Esophagus muscularis mucosa (tissue), 4 donors: ENCODE measurements at regions of chr4 and their contacts with region 1.

Region 1: DNA sequence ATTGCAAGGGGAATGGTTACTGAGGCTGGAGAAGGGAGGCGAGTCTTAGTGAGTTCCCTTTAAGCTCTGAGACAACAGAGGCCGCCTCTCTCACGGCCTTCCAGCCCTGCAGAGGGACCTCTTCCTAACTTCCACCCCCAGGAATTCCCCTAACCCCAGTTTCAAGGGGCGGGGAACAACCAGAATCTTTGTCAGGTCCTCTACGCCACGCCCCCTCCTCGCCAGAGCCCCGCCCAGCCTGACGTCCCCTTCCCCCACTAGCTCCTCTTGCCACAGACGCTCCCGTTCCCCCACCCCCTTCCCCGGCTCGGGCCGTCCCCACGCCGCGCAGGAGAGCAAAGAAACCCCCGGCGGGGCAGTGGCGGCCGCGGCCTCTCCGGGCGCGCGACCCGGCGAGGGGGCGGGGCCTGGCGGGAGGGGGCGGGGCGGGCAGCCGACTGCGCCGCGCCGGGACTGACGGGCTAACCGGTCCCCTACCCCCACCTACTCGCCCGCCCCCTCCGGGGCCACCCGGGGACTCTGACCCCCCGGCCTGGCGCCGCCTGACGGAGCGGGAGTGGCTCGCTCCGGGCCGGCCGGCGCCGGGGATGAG is 12.3 kb upstream of the TMEM156 start:
- DNase-seq: peak; percentile 98
- H3K4me3 ChIP-seq: peak overlapping the region; percentile 92 to 97 (median 96)
- H3K27ac ChIP-seq: peak overlapping the region; percentile 94 to 98 (median 98)
- H3K4me1 ChIP-seq: peaks cover 8 to 58% (median 57%) of the 10 kb centered on the region in 4 donors
- H3K27me3 ChIP-seq: no peaks in the 10 kb centered on the region
- CTCF ChIP-seq: peak in 1 of 3 experiments; percentile 6
- EP300 ChIP-seq: no peak
- POLR2A ChIP-seq: no peak

Region 2: DNA sequence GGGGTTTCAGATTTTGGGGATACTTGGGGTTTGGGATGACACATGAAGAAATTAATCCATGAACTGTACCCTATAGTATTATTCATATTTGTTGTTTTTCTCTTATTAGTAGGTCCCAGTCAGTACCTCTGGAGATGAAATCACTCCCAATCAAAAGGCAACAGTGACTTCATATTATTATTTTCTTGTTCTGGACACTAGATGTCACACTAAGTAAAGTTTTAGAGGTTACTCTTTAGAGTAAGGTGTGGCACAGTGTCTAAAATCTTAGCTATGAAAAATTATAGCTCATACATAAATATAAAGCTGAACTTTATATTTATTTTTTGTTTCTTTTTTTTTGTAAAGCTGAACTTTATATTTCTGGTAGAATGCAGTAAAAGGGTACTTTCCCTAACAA is 141.8 kb before region 1 on chr4:
- intact Hi-C with region 1: loop called (anchors 10 kb)
- DNase-seq: no peak
- H3K4me3 ChIP-seq: no peak overlapping the region
- H3K27ac ChIP-seq: no peak overlapping the region
- H3K4me1 ChIP-seq: peaks cover 0 to 42% (median 29%) of the 10 kb centered on the region in 4 donors
- H3K27me3 ChIP-seq: no peaks in the 10 kb centered on the region
- CTCF ChIP-seq: peak; percentile 40 to 52 (median 47)
- EP300 ChIP-seq: no peak
- POLR2A ChIP-seq: no peak

Region 3: DNA sequence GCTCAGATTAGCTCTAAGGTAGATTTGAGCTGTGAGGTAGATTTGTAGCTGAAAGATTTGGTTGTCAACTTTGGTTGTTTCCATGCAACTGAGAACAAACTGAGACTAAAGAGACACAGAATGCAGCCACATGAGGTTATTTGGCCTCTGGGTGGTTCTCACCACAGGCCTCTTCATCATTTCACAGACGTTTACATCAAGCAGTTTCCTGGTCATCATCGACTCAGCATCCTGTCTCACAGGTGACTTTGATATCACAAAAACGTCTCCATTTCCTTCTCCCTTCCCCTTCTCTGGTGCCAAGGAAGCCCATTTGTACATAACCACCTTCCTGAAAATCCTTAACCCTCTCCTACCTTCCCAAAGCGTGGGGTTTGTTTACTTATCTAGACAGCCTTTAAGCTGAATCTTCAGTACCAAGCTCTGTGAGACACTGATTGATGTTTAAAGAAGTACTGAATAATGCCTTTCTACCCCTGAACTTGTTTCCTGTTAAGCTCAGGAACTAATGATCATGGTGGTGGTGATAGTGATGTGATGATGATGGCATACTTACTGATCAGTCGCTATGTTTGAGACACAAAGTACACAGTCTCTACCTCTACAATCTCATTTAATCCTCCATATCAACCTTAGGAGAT is 94.9 kb before region 1 on chr4:
- intact Hi-C with region 1: loop called (anchors 5 kb)
- DNase-seq: no peak
- H3K4me3 ChIP-seq: no peak overlapping the region
- H3K27ac ChIP-seq: peak overlapping the region; percentile 84 to 87 (median 86)
- H3K4me1 ChIP-seq: peaks cover 0 to 70% (median 57%) of the 10 kb centered on the region in 4 donors
- H3K27me3 ChIP-seq: no peaks in the 10 kb centered on the region
- CTCF ChIP-seq: no peak
- EP300 ChIP-seq: no peak
- POLR2A ChIP-seq: no peak

Region 4: DNA sequence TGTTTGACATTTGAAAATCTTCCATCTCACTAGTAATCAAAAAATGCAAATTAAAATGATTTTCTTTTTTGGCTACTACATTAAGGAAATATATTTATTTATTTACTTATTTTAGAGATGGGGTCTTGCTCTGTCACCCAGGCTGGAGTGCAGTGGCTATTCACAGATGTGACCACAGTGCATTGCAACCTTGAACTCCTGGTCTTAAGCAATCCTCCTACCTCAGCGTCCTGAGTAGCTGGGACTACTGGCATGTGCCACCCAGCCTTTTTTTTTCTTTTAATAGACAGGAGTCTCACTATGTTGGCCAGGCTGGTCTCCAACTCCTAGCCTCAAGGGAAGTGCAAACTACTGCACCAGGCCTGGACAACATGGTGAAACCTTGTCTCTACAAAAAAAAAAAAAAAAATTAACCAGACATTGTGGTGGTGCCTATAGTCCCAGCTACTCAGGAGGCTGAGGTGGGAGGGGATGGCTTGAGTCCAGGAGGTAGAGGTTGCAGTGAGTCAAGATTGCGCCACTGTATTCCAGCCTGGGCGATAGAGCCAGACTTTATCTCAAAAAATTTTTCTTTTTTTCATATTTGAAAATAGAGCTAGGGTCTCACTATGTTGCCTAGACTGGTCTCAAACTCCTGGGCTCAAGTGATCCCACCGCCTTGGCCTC is 598.6 kb after region 1 on chr4:
- intact Hi-C with region 1: no loop called
- DNase-seq: no peak
- H3K4me3 ChIP-seq: no peak overlapping the region
- H3K27ac ChIP-seq: no peak overlapping the region
- H3K4me1 ChIP-seq: peaks cover 5 to 9% (median 8%) of the 10 kb centered on the region in 4 donors
- H3K27me3 ChIP-seq: no peaks in the 10 kb centered on the region
- CTCF ChIP-seq: no peak
- EP300 ChIP-seq: no peak
- POLR2A ChIP-seq: no peak